ENCODE measurements at regions of chr3 and their contacts with region 1.

Region 1: GRCh38 chr3:151282921-151283320 is 4.6 kb upstream of the P2RY14 start:
- DNase-seq: no peak
- H3K4me3 ChIP-seq: no peak overlapping the region
- CTCF ChIP-seq: peak; percentile 35

Region 2: GRCh38 chr3:151156618-151157216 is 126.2 kb before region 1 on chr3:
- CTCF ChIA-PET with region 1: interaction called, 33 read pairs
- POLR2A ChIA-PET with region 1: no interaction called
- DNase-seq: no peak
- H3K4me3 ChIP-seq: no peak overlapping the region
- CTCF ChIP-seq: peak; percentile 55

Region 3: DNA sequence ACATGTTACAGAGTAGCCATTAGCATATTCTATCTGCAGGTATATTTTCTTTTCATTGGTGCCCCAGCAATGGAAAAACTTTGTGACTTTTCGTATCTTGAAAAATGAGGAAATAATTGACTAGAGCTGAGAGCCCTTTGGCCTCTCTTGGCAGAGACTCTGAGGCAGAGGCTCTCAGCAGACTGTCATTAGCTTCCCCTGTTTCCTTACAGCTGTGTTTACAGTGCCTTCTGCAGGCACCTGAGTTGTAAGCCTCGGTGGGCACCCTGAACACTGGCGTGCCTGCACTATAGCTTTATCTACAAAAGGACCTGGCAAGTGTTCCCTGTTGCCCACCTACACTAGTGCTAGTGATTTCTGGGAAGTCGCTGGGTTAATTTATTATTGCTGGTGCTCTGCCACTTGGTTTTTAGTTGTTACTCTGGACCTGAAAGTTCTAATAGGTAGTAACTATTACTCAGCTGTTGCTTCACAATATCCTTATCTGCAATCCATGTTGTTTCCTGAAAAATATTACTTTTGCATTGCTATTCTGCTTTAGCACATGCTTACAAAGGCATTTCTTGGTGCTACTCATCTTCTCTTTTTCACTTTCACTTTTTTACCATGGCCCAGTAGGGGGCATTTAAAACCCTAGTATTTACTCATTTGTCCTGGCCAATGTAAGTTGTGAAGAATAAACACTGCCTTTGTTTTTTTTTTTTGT is 72.1 kb before region 1 on chr3:
- CTCF ChIA-PET with region 1: interaction called, 13 read pairs
- POLR2A ChIA-PET with region 1: no interaction called
- DNase-seq: no peak
- H3K4me3 ChIP-seq: no peak overlapping the region
- CTCF ChIP-seq: no peak

Region 4: DNA sequence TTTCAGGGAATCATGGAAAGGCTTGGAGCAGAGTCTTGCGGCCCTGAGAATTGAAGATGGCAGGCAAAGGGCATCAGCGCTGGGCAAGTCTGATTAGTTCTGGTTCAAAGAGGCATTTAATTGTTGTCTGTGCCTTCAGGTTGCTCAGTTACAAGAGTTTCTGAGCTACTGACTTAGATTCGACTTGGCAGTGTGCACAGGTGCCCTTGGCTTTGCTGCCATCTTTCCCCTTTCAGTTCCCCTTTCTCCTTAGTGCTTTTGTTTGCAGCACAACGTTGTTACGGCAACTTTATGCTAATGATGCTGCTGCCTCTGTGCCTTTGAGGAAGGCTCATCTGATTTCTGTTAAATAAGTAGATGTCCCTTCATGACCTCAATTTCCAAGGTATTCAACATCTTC is 17.1 kb before region 1 on chr3:
- CTCF ChIA-PET with region 1: interaction called, 35 read pairs
- POLR2A ChIA-PET with region 1: no interaction called
- DNase-seq: no peak
- H3K4me3 ChIP-seq: no peak overlapping the region
- CTCF ChIP-seq: no peak